ENCODE measurements at regions of chr21 and their contacts with region 1.

Region 1: GRCh38 chr21:33324291-33325221 is at the start of gene IFNAR1:
- DNase-seq: peak; percentile 94
- ATAC-seq: peak; percentile 90
- H3K4me3 ChIP-seq: peak within 1 kb of the TSS; percentile 93
- H3K27ac ChIP-seq: peak within 1 kb of the TSS; percentile 74
- H3K4me1 ChIP-seq: peaks cover 7% of the 10 kb centered on the region; the same call in 1 of the 2 replicates
- H3K27me3 ChIP-seq: no peaks in the 10 kb centered on the region
- CTCF ChIP-seq: no peak
- total RNA-seq, gene IFNAR1: 13.2 and 18.4 TPM in 2 replicates

Region 2: GRCh38 chr21:32278518-32279376 is 1045.8 kb before region 1 on chr21 and contains the start of gene MIS18A:
- CTCF ChIA-PET with region 1: no interaction called
- POLR2A ChIA-PET with region 1: interaction called, 17 read pairs
- intact Hi-C with region 1: no loop called
- DNase-seq: peak; percentile 98
- ATAC-seq: peak; percentile 92
- H3K4me3 ChIP-seq: peak within 1 kb of the TSS; percentile 92
- H3K27ac ChIP-seq: peak within 1 kb of the TSS; percentile 23
- H3K4me1 ChIP-seq: peaks cover 14% of the 10 kb centered on the region
- H3K27me3 ChIP-seq: no peaks in the 10 kb centered on the region
- CTCF ChIP-seq: no peak
- total RNA-seq, gene MIS18A: 42.0 and 54.5 TPM in 2 replicates

Region 3: DNA sequence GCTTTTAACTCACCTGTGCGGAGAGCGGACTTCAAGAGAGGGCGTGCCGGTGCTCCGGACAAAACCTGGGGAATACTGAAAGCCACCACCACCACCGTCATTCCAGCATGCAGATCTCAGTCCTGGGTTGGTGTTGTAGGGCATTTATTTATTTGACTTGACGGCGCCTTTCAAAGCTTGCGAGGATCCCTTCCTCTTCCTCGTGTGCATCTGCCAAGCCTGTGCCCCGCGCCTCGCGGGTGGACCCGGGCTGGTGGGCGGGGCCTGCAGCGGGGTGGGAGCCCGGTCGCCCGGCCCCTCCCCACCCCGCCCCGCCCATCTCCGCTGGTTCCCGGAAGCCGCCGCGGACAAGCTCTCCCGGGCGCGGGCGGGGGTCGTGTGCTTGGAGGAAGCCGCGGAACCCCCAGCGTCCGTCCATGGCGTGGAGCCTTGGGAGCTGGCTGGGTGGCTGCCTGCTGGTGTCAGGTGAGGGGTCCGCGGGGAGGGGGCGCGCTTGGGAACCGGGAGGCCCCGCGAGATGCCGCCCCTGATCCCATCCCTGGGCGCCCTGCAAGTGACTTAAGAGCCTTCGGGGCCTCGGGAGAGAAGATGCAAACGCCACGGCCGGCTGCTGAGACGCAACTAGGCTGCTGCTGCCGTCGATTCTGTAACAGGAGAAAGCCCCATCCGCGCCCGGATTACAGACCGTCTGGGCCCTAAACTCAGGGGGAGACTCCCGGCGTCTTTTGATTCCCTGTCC is 58.3 kb before region 1 on chr21 and contains the start of gene IL10RB:
- CTCF ChIA-PET with region 1: no interaction called
- POLR2A ChIA-PET with region 1: interaction called, 4 read pairs
- intact Hi-C with region 1: loop called (anchors 1 kb)
- DNase-seq: peak; percentile 66
- ATAC-seq: peak; percentile 79
- H3K4me3 ChIP-seq: peak within 1 kb of the TSS; percentile 88
- H3K27ac ChIP-seq: no peak within 1 kb of the TSS
- H3K4me1 ChIP-seq: peaks cover 14% of the 10 kb centered on the region
- H3K27me3 ChIP-seq: no peaks in the 10 kb centered on the region
- CTCF ChIP-seq: no peak
- total RNA-seq, gene IL10RB: 25.3 and 26.8 TPM in 2 replicates

Region 4: DNA sequence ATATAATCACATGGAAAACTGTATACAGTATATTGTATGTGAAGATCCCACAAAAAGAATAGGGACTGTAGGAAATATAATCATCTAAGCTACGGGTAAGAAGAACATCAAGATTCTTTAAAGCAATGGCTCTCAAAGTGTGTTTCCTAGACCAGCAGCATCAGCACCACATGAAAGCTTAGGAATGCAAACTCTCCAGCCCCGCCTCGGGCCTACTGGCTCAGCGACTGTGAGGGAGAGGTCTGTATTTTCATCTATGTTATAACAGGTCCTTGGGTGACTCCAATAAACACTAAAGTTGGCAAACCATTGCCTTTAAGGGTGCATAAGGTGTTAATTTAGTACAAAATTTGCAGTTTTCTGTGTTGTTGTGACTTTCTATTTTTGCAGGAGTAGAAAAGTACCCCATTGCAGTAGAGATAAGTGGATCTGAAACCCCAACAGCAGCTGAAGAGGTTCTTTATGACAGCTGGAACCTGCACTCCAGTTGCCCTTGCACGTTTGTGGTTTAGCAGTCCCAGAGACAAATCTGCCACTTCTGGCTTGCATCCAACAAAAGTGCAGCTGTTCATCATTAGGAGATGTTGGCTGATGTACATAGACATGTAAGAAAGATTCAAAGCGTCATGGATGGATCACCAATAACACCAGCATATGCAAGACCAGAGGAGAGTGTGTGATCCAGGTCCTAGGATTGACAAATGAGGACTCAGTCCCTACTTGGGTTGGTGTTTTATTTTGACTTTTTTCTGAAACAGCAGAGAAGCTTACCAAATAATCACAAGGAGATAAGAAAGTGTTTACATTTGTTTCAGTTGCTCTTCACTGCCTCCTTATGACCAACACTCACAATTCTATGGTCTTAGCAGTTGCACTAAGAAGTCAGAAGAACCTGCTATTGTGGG is 15.7 kb before region 1 on chr21:
- CTCF ChIA-PET with region 1: no interaction called
- POLR2A ChIA-PET with region 1: no interaction called
- intact Hi-C with region 1: no loop called
- DNase-seq: no peak
- ATAC-seq: no peak
- H3K4me3 ChIP-seq: no peak overlapping the region
- H3K27ac ChIP-seq: no peak overlapping the region
- H3K4me1 ChIP-seq: no peaks in the 10 kb centered on the region
- H3K27me3 ChIP-seq: no peaks in the 10 kb centered on the region
- CTCF ChIP-seq: no peak

Region 5: DNA sequence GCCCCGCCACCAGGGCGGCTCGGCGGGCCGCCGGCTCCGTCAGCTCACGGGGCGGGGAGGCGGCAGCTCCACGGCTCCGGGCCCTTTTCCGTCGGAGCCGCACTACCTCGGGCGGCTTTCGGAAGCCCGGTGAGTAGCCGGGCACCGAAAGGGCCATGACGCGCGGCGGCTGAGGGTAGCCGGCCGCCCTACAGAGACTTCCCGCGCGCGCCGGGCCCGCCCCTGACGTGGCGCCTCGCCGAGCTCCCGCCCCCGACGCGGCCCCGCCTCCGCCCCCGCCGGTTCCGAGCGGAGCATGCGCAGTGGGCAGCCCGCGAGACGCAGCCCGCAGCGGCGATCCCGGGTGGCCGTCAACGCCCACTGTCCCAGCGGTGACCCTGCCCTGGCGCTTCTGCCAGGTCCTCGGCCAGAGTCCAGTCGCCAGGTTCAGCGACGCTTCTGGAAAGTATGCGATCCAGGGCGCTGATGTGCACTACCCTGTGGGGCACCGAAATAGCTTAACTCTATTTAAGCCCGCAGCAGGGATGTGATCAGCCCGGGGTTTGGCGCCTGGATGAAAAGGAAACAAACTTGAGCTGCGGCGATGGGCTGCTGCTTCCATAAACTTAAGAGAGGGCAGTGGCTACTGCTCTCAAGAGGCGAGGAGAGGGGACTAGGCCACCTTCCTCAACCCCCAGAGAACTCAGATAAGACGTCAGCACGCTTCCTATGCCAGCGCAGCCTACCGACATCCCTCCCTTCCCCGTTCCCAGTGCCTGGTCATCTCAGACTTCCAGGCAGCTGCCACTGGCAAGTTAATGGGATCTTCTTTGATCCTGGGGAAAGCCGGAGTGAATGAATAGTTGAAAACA is 264.2 kb after region 1 on chr21 and contains the start of gene DONSON:
- CTCF ChIA-PET with region 1: no interaction called
- POLR2A ChIA-PET with region 1: interaction called, 17 read pairs
- intact Hi-C with region 1: no loop called
- DNase-seq: peak; percentile 87
- ATAC-seq: peak; percentile 85
- H3K4me3 ChIP-seq: peak within 1 kb of the TSS; percentile 98
- H3K27ac ChIP-seq: peak within 1 kb of the TSS; percentile 51
- H3K4me1 ChIP-seq: peaks cover 25% of the 10 kb centered on the region
- H3K27me3 ChIP-seq: no peaks in the 10 kb centered on the region
- CTCF ChIP-seq: no peak
- total RNA-seq, gene DONSON: 29.2 and 41.9 TPM in 2 replicates

Measured in PC-3 (cell line).